CD8-positive, alpha-beta T cell (primary cell): ENCODE measurements at regions of chr4 and their contacts with region 1.

Region 1: DNA sequence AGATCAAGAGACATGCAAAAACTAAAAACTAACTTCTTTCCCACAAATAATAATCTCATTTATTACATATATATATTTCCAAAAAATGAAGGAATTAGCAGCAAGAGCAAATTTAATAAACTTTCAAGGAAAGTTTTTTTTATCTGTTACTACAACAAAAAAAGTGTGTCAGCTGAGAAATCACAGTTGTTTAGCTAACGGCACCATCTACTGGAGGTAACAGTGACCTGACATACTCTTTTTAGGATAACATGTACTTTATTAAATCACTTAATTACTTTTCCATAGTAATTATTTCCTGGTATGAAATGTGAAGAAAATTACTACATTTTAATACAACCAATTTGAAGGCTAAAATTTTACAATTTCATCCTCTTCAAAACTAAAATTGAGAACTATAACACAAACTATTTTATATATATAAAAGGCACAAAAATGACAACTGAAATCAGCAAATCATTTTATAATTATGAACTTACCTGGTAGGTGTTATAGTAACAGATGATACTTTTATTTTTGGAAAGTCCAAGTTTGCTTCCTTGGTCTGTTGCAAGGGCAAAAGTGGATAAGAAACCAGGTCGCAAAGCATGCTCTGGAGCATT is 9.1 kb downstream of the LAMTOR3 start:
- DNase-seq: peak in 4 of 9 experiments; percentile 20 to 72 (median 41)
- ATAC-seq: no peak
- H3K4me3 ChIP-seq: no peak overlapping the region
- H3K4me3 Mint-ChIP-seq: no peak overlapping the region
- H3K27ac ChIP-seq: no peak overlapping the region
- H3K27ac Mint-ChIP-seq: no peak overlapping the region
- H3K4me1 ChIP-seq: peaks cover 2% of the 10 kb centered on the region
- H3K4me1 Mint-ChIP-seq: peaks cover 16% of the 10 kb centered on the region
- H3K27me3 ChIP-seq: no peaks in the 10 kb centered on the region
- H3K27me3 Mint-ChIP-seq: no peaks in the 10 kb centered on the region
- CTCF ChIP-seq: peak; percentile 67

Region 2: GRCh38 chr4:99841129-99841528 is 44.0 kb before region 1 on chr4:
- CTCF ChIA-PET with region 1: no interaction called
- POLR2A ChIA-PET with region 1: no interaction called
- intact Hi-C with region 1: loop called in 1 of 2 experiments (anchors 2 kb)
- DNase-seq: no peak
- ATAC-seq: peak; percentile 29
- H3K4me3 ChIP-seq: no peak overlapping the region
- H3K4me3 Mint-ChIP-seq: no peak overlapping the region
- H3K27ac ChIP-seq: no peak overlapping the region
- H3K27ac Mint-ChIP-seq: no peak overlapping the region
- H3K4me1 ChIP-seq: peaks cover 12% of the 10 kb centered on the region
- H3K4me1 Mint-ChIP-seq: peaks cover 16% of the 10 kb centered on the region
- H3K27me3 ChIP-seq: no peaks in the 10 kb centered on the region
- H3K27me3 Mint-ChIP-seq: no peaks in the 10 kb centered on the region
- CTCF ChIP-seq: no peak

Region 3: GRCh38 chr4:100208964-100209363 is 323.8 kb after region 1 on chr4:
- CTCF ChIA-PET with region 1: no interaction called
- POLR2A ChIA-PET with region 1: no interaction called
- intact Hi-C with region 1: no loop called
- DNase-seq: peak in 1 of 9 experiments; percentile 42
- ATAC-seq: no peak
- H3K4me3 ChIP-seq: no peak overlapping the region
- H3K4me3 Mint-ChIP-seq: no peak overlapping the region
- H3K27ac ChIP-seq: no peak overlapping the region
- H3K27ac Mint-ChIP-seq: no peak overlapping the region
- H3K4me1 ChIP-seq: no peaks in the 10 kb centered on the region
- H3K4me1 Mint-ChIP-seq: no peaks in the 10 kb centered on the region
- H3K27me3 ChIP-seq: no peaks in the 10 kb centered on the region
- H3K27me3 Mint-ChIP-seq: peaks cover 20% of the 10 kb centered on the region
- CTCF ChIP-seq: no peak

Region 4: GRCh38 chr4:100462206-100462605 is 577.0 kb after region 1 on chr4:
- CTCF ChIA-PET with region 1: no interaction called
- POLR2A ChIA-PET with region 1: no interaction called
- intact Hi-C with region 1: no loop called
- DNase-seq: no peak
- ATAC-seq: no peak
- H3K4me3 ChIP-seq: no peak overlapping the region
- H3K4me3 Mint-ChIP-seq: no peak overlapping the region
- H3K27ac ChIP-seq: no peak overlapping the region
- H3K27ac Mint-ChIP-seq: no peak overlapping the region
- H3K4me1 ChIP-seq: peaks cover 14% of the 10 kb centered on the region
- H3K4me1 Mint-ChIP-seq: peaks cover 17% of the 10 kb centered on the region
- H3K27me3 ChIP-seq: no peaks in the 10 kb centered on the region
- H3K27me3 Mint-ChIP-seq: no peaks in the 10 kb centered on the region
- CTCF ChIP-seq: no peak